A673 (cell line): ENCODE measurements at regions of chr9 and their contacts with region 1.

Region 1: GRCh38 chr9:130118841-130119518 is 53.2 kb upstream of the NCS1 start:
- DNase-seq: peak; percentile 96
- H3K4me3 ChIP-seq: no peak overlapping the region
- H3K27ac ChIP-seq: peak overlapping the region; percentile 81
- H3K4me1 ChIP-seq: peaks cover 37% of the 10 kb centered on the region
- H3K27me3 ChIP-seq: no peaks in the 10 kb centered on the region
- CTCF ChIP-seq: no peak

Region 2: GRCh38 chr9:129242941-129243561 is 875.9 kb before region 1 on chr9:
- CTCF ChIA-PET with region 1: no interaction called
- POLR2A ChIA-PET with region 1: interaction called, 16 read pairs
- intact Hi-C with region 1: no loop called
- DNase-seq: no peak
- H3K4me3 ChIP-seq: no peak overlapping the region
- H3K27ac ChIP-seq: no peak overlapping the region
- H3K4me1 ChIP-seq: no peaks in the 10 kb centered on the region
- H3K27me3 ChIP-seq: no peaks in the 10 kb centered on the region
- CTCF ChIP-seq: no peak

Region 3: GRCh38 chr9:129850821-129851540 is 268.0 kb before region 1 on chr9:
- CTCF ChIA-PET with region 1: no interaction called
- POLR2A ChIA-PET with region 1: no interaction called
- intact Hi-C with region 1: no loop called
- DNase-seq: no peak
- H3K4me3 ChIP-seq: no peak overlapping the region
- H3K27ac ChIP-seq: no peak overlapping the region
- H3K4me1 ChIP-seq: no peaks in the 10 kb centered on the region
- H3K27me3 ChIP-seq: no peaks in the 10 kb centered on the region
- CTCF ChIP-seq: no peak

Region 4: GRCh38 chr9:130421802-130422276 is 302.9 kb after region 1 on chr9:
- CTCF ChIA-PET with region 1: no interaction called
- POLR2A ChIA-PET with region 1: interaction called, 27 read pairs
- intact Hi-C with region 1: loop called (anchors 5 kb)
- DNase-seq: peak; percentile 99
- H3K4me3 ChIP-seq: no peak overlapping the region
- H3K27ac ChIP-seq: no peak overlapping the region
- H3K4me1 ChIP-seq: peaks cover 27% of the 10 kb centered on the region
- H3K27me3 ChIP-seq: peaks cover 37% of the 10 kb centered on the region
- CTCF ChIP-seq: no peak